AG04449 (cell line): ENCODE measurements at regions of chr1 and their contacts with region 1.

Region 1: GRCh38 chr1:20987831-20988825 is 188.6 kb downstream of the EIF4G3 start:
- DNase-seq: no peak
- H3K4me3 ChIP-seq: no peak overlapping the region
- CTCF ChIP-seq: no peak

Region 2: GRCh38 chr1:20964540-20965484 is 23.3 kb before region 1 on chr1:
- CTCF ChIA-PET with region 1: no interaction called
- POLR2A ChIA-PET with region 1: no interaction called
- DNase-seq: no peak
- H3K4me3 ChIP-seq: no peak overlapping the region
- CTCF ChIP-seq: no peak

Region 3: DNA sequence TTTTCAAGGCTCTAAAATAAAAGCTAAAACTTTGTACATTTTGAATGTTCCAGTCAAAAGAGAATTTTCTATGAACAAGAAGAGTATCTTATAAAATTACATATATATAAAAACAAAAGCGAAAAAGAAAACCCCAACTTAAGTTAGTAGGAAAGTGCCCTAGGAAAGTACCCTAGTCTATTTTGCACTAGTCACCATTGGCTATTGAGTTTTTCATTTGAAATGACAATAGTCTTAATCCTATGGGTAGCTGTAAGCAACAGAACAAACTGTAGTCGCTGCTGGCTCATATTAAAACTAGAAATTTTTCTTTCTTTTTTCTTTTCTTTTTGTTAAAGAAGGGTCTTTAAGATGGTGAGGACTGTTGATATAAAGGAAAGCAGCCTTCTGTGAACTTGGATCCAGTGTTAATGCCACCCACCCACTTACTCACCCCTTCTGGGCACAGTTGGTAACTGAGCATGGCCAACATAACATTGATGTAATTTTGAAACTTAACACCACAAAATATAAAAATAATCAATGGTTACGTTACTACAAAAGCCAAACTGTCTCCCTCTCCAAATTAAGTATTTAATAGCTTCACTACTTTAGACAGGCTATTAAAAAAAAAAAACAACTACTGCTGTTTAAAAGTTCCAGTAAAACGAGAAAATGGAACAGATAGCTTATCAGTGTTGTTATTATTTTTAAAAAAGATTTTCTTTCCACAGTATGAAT is 11.6 kb after region 1 on chr1:
- CTCF ChIA-PET with region 1: interaction called, 10 read pairs
- POLR2A ChIA-PET with region 1: no interaction called
- DNase-seq: no peak
- H3K4me3 ChIP-seq: no peak overlapping the region
- CTCF ChIP-seq: no peak